Gastrocnemius medialis (tissue), 4 donors: ENCODE measurements at regions of chr17 and their contacts with region 1.

Region 1: GRCh38 chr17:52449959-52450358 is 291.4 kb upstream of the CA10 start:
- DNase-seq: no peak
- ATAC-seq: no peak
- H3K4me3 ChIP-seq: no peak overlapping the region
- H3K27ac ChIP-seq: no peak overlapping the region
- H3K4me1 ChIP-seq: no peaks in the 10 kb centered on the region
- H3K27me3 ChIP-seq: no peaks in the 10 kb centered on the region
- CTCF ChIP-seq: no peak
- POLR2A ChIP-seq: no peak

Region 2: DNA sequence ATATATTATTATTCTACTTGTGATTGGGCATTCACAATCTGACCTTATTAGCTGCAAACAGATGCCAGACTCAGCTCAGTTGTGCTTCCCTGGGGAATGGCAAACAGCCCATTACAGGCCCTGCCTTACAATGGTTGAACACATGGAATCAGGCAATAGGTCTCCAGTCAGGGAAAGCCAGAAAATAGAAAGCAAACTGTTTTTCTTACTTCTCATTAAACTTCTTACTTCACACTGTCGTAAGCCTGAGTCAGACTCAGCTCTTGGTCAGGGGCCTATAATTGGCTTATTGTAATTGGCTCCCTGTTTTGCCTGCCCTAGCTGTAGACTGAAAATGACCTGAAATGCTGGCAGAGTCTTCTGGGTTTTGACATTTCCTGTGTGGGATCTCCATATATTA is 214.4 kb before region 1 on chr17:
- in situ Hi-C with region 1: no loop called
- intact Hi-C with region 1: no loop called
- DNase-seq: no peak
- ATAC-seq: no peak
- H3K4me3 ChIP-seq: no peak overlapping the region
- H3K27ac ChIP-seq: no peak overlapping the region
- H3K4me1 ChIP-seq: no peaks in the 10 kb centered on the region
- H3K27me3 ChIP-seq: no peaks in the 10 kb centered on the region
- CTCF ChIP-seq: no peak
- POLR2A ChIP-seq: no peak

Region 3: DNA sequence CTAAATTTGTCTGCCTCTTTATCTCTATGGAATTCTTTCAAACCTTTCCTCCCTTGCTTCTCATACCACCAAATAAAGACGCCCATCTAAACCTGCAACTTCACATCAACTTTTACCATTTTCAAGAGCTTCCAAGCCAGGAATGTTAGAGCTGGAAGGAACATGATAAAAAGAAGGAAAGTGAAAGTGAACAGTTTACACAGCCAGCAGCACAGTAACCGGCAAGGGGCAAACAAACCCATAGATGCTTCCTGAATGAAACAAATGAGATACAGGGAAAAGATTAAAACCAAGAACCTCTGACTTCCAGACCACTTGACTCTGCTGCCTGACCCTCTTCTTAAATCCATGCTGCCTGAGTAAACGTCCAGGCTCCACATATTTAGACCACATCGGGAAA is 60.3 kb before region 1 on chr17:
- in situ Hi-C with region 1: no loop called
- intact Hi-C with region 1: no loop called
- DNase-seq: no peak
- ATAC-seq: no peak
- H3K4me3 ChIP-seq: no peak overlapping the region
- H3K27ac ChIP-seq: no peak overlapping the region
- H3K4me1 ChIP-seq: no peaks in the 10 kb centered on the region
- H3K27me3 ChIP-seq: no peaks in the 10 kb centered on the region
- CTCF ChIP-seq: no peak
- POLR2A ChIP-seq: no peak

Region 4: GRCh38 chr17:52536489-52536888 is 86.5 kb after region 1 on chr17:
- in situ Hi-C with region 1: loop called in 1 of 4 experiments (anchors 25 kb)
- intact Hi-C with region 1: no loop called
- DNase-seq: peak in 1 of 2 donors; percentile 10
- ATAC-seq: no peak
- H3K4me3 ChIP-seq: no peak overlapping the region
- H3K27ac ChIP-seq: no peak overlapping the region
- H3K4me1 ChIP-seq: peaks cover 0 to 2% of the 10 kb centered on the region in 2 donors
- H3K27me3 ChIP-seq: no peaks in the 10 kb centered on the region
- CTCF ChIP-seq: no peak
- POLR2A ChIP-seq: no peak